ENCODE measurements at regions of chr12 and their contacts with region 1.

Region 1: GRCh38 chr12:97575403-97576193 is 113.0 kb downstream of the RMST start:
- DNase-seq: no peak
- ATAC-seq: no peak
- H3K4me3 ChIP-seq: no peak overlapping the region
- H3K27ac ChIP-seq: no peak overlapping the region
- H3K4me1 ChIP-seq: no peaks in the 10 kb centered on the region
- H3K27me3 ChIP-seq: no peaks in the 10 kb centered on the region
- CTCF ChIP-seq: no peak
- EP300 ChIP-seq: no peak
- POLR2A ChIP-seq: no peak
- RAD21 ChIP-seq: no peak

Region 2: DNA sequence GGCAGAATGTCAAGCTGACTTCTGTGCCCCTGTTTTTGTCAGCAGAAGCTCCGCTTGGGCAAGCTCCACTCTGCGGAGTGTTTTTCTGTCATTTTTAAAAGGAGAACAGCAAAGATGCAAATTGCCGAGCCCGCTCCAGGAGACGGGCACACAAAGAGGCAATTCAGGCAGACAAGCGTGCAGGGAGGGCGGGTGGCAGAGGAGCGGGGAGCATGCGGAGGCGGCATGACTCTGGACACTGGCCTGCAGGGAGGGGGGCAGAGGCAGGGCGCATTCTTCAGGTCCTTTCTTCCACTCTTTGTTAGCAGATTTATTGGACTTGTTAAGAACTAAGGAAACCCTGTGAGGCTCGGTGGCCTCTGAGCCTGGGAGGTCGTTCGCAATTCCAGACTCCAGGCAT is 300.3 kb before region 1 on chr12:
- CTCF ChIA-PET with region 1: no interaction called
- POLR2A ChIA-PET with region 1: no interaction called
- RAD21 ChIA-PET with region 1: no interaction called
- SMC1A ChIA-PET with region 1: no interaction called
- in situ Hi-C with region 1: no loop called
- intact Hi-C with region 1: loop called (anchors 10 kb)
- DNase-seq: no peak
- ATAC-seq: no peak
- H3K4me3 ChIP-seq: no peak overlapping the region
- H3K27ac ChIP-seq: no peak overlapping the region
- H3K4me1 ChIP-seq: no peaks in the 10 kb centered on the region
- H3K27me3 ChIP-seq: no peaks in the 10 kb centered on the region; a peak in 1 of 4 replicates
- CTCF ChIP-seq: no peak
- EP300 ChIP-seq: no peak
- POLR2A ChIP-seq: no peak
- RAD21 ChIP-seq: no peak

Region 3: GRCh38 chr12:98319716-98320425 is 744.3 kb after region 1 on chr12:
- CTCF ChIA-PET with region 1: no interaction called
- POLR2A ChIA-PET with region 1: no interaction called
- RAD21 ChIA-PET with region 1: no interaction called
- SMC1A ChIA-PET with region 1: no interaction called
- in situ Hi-C with region 1: no loop called
- intact Hi-C with region 1: no loop called
- DNase-seq: no peak
- ATAC-seq: peak; percentile 4; the same call in 2 of the 3 replicates
- H3K4me3 ChIP-seq: no peak overlapping the region
- H3K27ac ChIP-seq: no peak overlapping the region
- H3K4me1 ChIP-seq: peaks cover 2% of the 10 kb centered on the region; the same call in 1 of the 2 replicates
- H3K27me3 ChIP-seq: no peaks in the 10 kb centered on the region
- CTCF ChIP-seq: no peak
- EP300 ChIP-seq: no peak
- POLR2A ChIP-seq: no peak
- RAD21 ChIP-seq: no peak